Naive thymus-derived CD4-positive, alpha-beta T cell (primary cell): ENCODE measurements at regions of chr18 and their contacts with region 1.

Region 1: GRCh38 chr18:29002747-29003565 is 826.0 kb upstream of the CDH2 start:
- DNase-seq: no peak
- ATAC-seq: no peak
- H3K4me3 ChIP-seq: no peak overlapping the region
- H3K4me3 Mint-ChIP-seq: no peak overlapping the region
- H3K27ac ChIP-seq: no peak overlapping the region
- H3K27ac Mint-ChIP-seq: no peak overlapping the region
- H3K4me1 ChIP-seq: no peaks in the 10 kb centered on the region
- H3K4me1 Mint-ChIP-seq: no peaks in the 10 kb centered on the region
- H3K27me3 ChIP-seq: no peaks in the 10 kb centered on the region
- H3K27me3 Mint-ChIP-seq: no peaks in the 10 kb centered on the region

Region 2: DNA sequence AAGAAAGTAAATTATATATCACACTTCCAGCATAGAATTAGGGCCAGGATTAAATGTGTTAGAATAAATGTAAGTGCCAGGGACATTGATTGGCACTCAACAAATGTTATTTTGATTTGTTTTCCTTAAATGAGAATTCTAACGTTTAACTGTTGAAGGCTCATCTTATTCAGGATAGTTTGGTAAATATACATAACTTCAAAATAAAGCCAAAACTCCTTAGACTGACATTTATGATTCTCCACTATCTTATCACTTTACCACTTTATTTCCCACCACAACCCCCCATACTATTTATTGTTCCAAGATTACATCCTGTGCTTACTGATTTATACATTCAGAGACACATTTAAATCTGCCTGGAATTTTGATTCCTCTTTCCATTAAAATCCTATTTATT is 56.5 kb before region 1 on chr18:
- CTCF ChIA-PET with region 1: no interaction called
- POLR2A ChIA-PET with region 1: no interaction called
- intact Hi-C with region 1: loop called (anchors 10 kb)
- DNase-seq: no peak
- ATAC-seq: no peak
- H3K4me3 ChIP-seq: no peak overlapping the region
- H3K4me3 Mint-ChIP-seq: no peak overlapping the region
- H3K27ac ChIP-seq: no peak overlapping the region
- H3K27ac Mint-ChIP-seq: no peak overlapping the region
- H3K4me1 ChIP-seq: no peaks in the 10 kb centered on the region
- H3K4me1 Mint-ChIP-seq: no peaks in the 10 kb centered on the region
- H3K27me3 ChIP-seq: no peaks in the 10 kb centered on the region
- H3K27me3 Mint-ChIP-seq: no peaks in the 10 kb centered on the region